ENCODE measurements at regions of chr12 and their contacts with region 1.

Region 1: DNA sequence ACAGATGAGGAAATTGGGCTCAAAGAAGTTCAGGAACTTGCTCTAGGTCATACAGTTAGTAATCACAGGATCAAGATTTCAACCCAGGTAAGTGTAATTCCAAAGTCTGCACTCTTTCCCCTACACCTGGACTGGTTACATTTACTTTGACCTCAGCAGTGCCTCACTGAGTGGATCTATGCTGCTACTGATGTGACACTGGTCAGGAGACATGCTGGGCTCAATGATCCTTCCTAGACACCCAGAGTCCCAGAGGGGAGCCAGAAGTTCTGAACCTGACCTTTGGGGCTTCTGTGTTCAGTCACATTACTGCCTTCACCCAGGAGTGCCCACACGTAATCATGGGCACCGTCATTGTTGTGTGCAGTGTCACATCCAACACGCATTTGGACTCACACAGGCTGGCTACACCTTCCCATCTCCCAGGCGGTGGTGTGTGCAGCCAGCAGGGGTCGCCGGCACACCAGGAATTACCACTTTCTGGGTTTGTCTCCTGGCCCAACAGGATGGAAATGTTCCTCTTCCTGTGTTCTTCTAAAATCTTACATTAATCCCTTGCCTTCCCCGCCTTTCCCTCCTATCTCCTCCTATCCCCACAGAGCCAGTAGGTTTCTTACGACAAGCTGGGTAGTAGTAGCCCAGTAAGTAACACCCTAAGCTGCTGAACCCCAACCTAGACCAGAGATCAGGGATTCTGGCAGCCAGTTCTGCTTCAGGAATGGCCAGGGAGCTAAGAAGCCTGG is 25.6 kb downstream of the CALCOCO1 start:
- DNase-seq: no peak
- H3K4me3 ChIP-seq: no peak overlapping the region
- CTCF ChIP-seq: peak; percentile 96

Region 2: GRCh38 chr12:53719649-53720048 is 18.0 kb after region 1 on chr12:
- CTCF ChIA-PET with region 1: interaction called, 941 read pairs
- POLR2A ChIA-PET with region 1: no interaction called
- DNase-seq: no peak
- H3K4me3 ChIP-seq: no peak overlapping the region
- CTCF ChIP-seq: no peak

Region 3: GRCh38 chr12:53727310-53728041 is 25.8 kb after region 1 on chr12 and contains the start of gene CALCOCO1:
- CTCF ChIA-PET with region 1: interaction called, 941 read pairs
- POLR2A ChIA-PET with region 1: interaction called, 3 read pairs
- DNase-seq: peak; percentile 80
- H3K4me3 ChIP-seq: peak within 1 kb of the TSS; percentile 95
- CTCF ChIP-seq: no peak

Region 4: DNA sequence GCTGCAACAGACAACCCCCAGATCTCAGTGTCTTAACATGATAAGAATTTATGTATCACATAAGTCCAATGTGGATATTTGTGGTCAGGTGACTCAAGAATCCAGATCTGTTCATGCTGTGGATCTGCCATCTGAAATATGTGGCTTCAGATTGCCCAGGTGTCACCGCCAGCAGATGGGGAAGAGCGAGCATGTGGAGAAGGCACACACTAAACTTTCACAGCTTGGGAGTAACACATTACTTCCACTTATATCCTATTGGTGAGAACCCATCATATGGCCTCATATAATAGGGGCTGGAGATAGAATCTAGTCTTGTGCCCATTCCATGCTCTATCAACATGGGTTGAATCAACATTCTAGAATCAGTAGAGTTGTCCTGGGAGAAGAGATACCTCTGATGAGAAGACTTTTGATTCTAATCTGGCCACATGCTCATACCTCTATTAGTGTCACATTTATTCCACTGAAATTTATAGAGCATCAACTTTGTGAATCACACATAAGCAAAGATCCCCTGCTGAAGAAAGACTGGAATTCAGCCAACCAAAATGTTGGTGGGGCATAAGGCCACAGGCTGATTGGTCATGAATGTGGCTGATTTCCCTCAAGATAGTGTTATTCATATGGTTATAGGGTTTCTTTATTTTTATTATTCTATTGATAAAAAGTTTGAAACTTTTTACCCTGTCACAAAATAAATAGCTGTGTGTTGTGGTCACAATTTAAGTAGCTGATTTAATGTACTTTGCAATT is 31.5 kb after region 1 on chr12:
- CTCF ChIA-PET with region 1: interaction called, 941 read pairs
- POLR2A ChIA-PET with region 1: interaction called, 3 read pairs
- DNase-seq: no peak
- H3K4me3 ChIP-seq: no peak overlapping the region
- CTCF ChIP-seq: no peak

Region 5: DNA sequence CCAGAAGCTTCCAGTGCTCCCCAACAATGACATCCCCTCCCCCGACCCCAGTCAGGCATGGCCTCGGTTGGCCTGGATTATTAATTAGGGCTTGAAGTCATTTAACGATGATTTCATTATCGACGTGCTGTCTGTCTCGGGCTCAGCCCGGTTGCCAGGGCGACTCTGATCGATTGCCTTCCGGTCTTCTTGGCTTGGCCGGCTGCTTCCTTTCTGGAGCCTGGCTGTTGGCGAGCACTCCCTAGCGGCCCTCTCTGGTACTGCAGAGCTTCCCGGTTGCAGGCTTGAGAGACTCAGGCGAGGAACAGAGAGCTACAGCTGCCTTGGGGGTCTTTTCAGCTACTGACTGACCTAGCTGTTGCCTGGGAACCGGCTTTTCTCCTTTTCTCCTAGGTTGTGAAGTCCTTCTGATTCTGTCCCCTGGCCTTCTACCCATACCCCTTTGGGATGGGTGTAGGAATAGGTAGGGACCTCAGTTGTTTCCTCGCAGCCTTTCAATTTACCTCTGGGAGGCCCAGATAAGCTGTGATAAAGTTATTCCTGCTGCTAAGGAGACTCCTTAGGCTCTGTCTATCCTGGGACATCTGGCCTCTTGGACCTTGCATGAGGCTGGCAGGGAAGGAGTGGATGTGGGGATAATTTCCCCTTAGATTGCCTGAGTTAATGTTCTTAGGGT is 55.5 kb after region 1 on chr12:
- CTCF ChIA-PET with region 1: interaction called, 50 read pairs
- POLR2A ChIA-PET with region 1: no interaction called
- DNase-seq: no peak
- H3K4me3 ChIP-seq: no peak overlapping the region
- CTCF ChIP-seq: peak; percentile 85

Measured in AG04449 (cell line).